ENCODE measurements at regions of chr1 and their contacts with region 1.

Region 1: GRCh38 chr1:228989992-228990827 is 254.9 kb downstream of the RHOU start:
- DNase-seq: peak; percentile 86 to 93 (median 87)
- H3K4me3 ChIP-seq: peak overlapping the region in 1 of 3 experiments; percentile 23
- H3K4me3 Mint-ChIP-seq: peak overlapping the region in 1 of 2 donors; percentile 39
- H3K27ac ChIP-seq: peak overlapping the region; percentile 91 to 92
- H3K27ac Mint-ChIP-seq: peak overlapping the region; percentile 92 to 98 (median 96)
- H3K4me1 ChIP-seq: peaks cover 86 to 96% of the 10 kb centered on the region in 2 donors
- H3K4me1 Mint-ChIP-seq: peaks cover 93% of the 10 kb centered on the region
- H3K27me3 ChIP-seq: no peaks in the 10 kb centered on the region
- H3K27me3 Mint-ChIP-seq: no peaks in the 10 kb centered on the region
- CTCF ChIP-seq: no peak

Region 2: DNA sequence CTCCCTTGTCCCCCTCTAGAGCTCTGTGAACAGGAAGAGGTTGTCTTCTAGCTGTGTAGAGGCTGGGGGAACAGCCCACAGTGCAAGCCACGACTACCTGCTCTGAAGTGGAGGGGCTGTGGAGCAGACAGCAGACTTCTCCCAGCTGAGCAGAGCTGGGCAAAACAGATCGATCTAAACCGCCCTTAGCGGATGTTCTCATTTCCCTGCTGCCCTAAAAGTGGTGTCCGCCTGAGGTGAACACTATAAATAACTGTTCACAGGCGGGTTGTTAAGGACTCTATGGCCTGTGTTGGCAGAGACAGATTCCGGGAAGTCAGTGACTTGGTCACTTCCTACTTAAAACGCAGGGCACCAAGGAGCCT is 51.7 kb before region 1 on chr1:
- intact Hi-C with region 1: loop called in 1 of 2 experiments (anchors 5 kb)
- DNase-seq: peak in 2 of 3 donors; percentile 43 to 55
- H3K4me3 ChIP-seq: peak overlapping the region in 1 of 3 experiments; percentile 38
- H3K4me3 Mint-ChIP-seq: peak overlapping the region; percentile 52 to 78
- H3K27ac ChIP-seq: peak overlapping the region; percentile 61 to 77
- H3K27ac Mint-ChIP-seq: peak overlapping the region; percentile 78 to 92 (median 87)
- H3K4me1 ChIP-seq: peaks cover 76 to 81% of the 10 kb centered on the region in 2 donors
- H3K4me1 Mint-ChIP-seq: peaks cover 84% of the 10 kb centered on the region
- H3K27me3 ChIP-seq: no peaks in the 10 kb centered on the region
- H3K27me3 Mint-ChIP-seq: peaks cover 0 to 5% (median 1%) of the 10 kb centered on the region in 3 donors
- CTCF ChIP-seq: no peak

Region 3: GRCh38 chr1:229068270-229068987 is 78.2 kb after region 1 on chr1:
- intact Hi-C with region 1: loop called in 1 of 2 experiments (anchors 5 kb)
- DNase-seq: peak; percentile 87 to 96 (median 92)
- H3K4me3 ChIP-seq: peak overlapping the region in 1 of 3 experiments; percentile 48
- H3K4me3 Mint-ChIP-seq: peak overlapping the region; percentile 47 to 67
- H3K27ac ChIP-seq: peak overlapping the region; percentile 76 to 82
- H3K27ac Mint-ChIP-seq: peak overlapping the region; percentile 91 to 96 (median 94)
- H3K4me1 ChIP-seq: peaks cover 78 to 88% of the 10 kb centered on the region in 2 donors
- H3K4me1 Mint-ChIP-seq: peaks cover 88% of the 10 kb centered on the region
- H3K27me3 ChIP-seq: no peaks in the 10 kb centered on the region
- H3K27me3 Mint-ChIP-seq: peaks cover 0 to 2% (median 0%) of the 10 kb centered on the region in 3 donors
- CTCF ChIP-seq: no peak

Region 4: DNA sequence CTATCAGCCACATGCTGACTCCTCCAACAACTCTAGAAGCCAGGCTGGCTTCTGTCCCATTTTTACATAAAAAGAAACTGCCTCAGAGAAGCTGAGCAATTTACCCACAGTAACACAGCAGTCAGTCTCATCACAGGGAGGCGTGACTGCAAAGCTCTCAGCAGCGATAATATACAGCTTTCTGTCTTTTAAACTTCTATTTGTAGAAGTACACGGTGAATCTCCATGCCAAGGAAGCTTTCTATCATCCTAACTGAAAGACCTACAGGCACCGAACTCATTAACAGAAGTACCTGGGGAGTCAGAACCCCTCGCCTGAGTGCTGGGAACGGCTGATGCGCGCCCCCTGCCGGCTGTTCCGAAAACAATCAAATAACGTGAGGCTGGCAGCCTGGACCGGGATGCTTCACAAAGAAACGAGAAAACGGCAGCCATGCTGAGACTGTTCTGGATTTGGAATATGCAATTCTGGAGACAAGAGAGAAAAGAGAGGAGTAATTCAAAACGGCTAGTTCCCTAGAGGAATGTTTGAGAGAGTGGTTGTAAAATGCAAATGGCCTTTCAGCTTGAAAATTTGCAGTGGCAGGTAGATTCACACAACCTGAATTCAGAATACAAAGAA is 237.2 kb after region 1 on chr1:
- intact Hi-C with region 1: loop called in 1 of 2 experiments (anchors 10 kb)
- DNase-seq: peak; percentile 68 to 79 (median 78)
- H3K4me3 ChIP-seq: no peak overlapping the region
- H3K4me3 Mint-ChIP-seq: no peak overlapping the region
- H3K27ac ChIP-seq: no peak overlapping the region
- H3K27ac Mint-ChIP-seq: peak overlapping the region in 2 of 7 donors; percentile 3 to 21
- H3K4me1 ChIP-seq: peaks cover 24 to 30% of the 10 kb centered on the region in 2 donors
- H3K4me1 Mint-ChIP-seq: peaks cover 35% of the 10 kb centered on the region
- H3K27me3 ChIP-seq: no peaks in the 10 kb centered on the region
- H3K27me3 Mint-ChIP-seq: peaks cover 0 to 10% (median 3%) of the 10 kb centered on the region in 3 donors
- CTCF ChIP-seq: peak; percentile 94

Measured in CD14-positive monocyte (primary cell).